Spleen (tissue), 13 donors: ENCODE measurements at regions of chr11 and their contacts with region 1.

Region 1: GRCh38 chr11:122863704-122864326 is 18.7 kb upstream of the JHY start:
- DNase-seq: no peak
- H3K4me3 ChIP-seq: peak overlapping the region in 1 of 8 donors; percentile 20
- H3K27ac ChIP-seq: peak overlapping the region in 2 of 8 donors; percentile 1 to 58
- H3K4me1 ChIP-seq: peaks cover 0 to 11% (median 7%) of the 10 kb centered on the region in 6 donors
- H3K27me3 ChIP-seq: peaks cover 0 to 13% (median 0%) of the 10 kb centered on the region in 7 donors
- CTCF ChIP-seq: peak; percentile 49 to 82 (median 75)
- POLR2A ChIP-seq: no peak

Region 2: GRCh38 chr11:122954455-122954854 is 90.6 kb after region 1 on chr11:
- intact Hi-C with region 1: no loop called
- DNase-seq: no peak
- H3K4me3 ChIP-seq: no peak overlapping the region
- H3K27ac ChIP-seq: no peak overlapping the region
- H3K4me1 ChIP-seq: peaks cover 0 to under 1% (median 0%) of the 10 kb centered on the region in 6 donors
- H3K27me3 ChIP-seq: no peaks in the 10 kb centered on the region
- CTCF ChIP-seq: no peak
- POLR2A ChIP-seq: no peak

Region 3: DNA sequence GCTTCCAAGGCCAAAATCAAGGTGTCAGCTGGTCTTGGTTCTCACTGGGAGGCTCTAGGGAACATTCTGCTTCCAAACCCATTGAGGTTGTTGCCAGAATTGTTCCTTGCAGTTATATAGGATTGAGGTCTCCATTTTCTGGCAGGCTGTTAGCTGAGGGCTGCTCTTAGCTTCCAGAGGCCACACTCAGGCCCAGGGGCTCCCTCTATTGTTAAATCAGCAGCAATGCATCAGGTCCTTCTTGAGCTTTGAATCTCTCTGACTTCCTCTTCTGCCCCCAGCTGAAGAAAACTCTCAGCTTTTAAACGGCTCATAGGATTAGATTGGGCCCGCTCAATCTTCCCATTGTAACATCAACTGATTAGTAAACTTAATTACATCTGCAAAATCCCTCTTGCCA is 157.2 kb after region 1 on chr11:
- intact Hi-C with region 1: loop called (anchors 10 kb)
- DNase-seq: no peak
- H3K4me3 ChIP-seq: no peak overlapping the region
- H3K27ac ChIP-seq: no peak overlapping the region
- H3K4me1 ChIP-seq: peaks cover 0 to 12% (median 8%) of the 10 kb centered on the region in 6 donors
- H3K27me3 ChIP-seq: peaks cover 0 to 11% (median 0%) of the 10 kb centered on the region in 7 donors
- CTCF ChIP-seq: peak in 9 of 11 experiments; percentile 14 to 67 (median 44)
- POLR2A ChIP-seq: no peak

Region 4: GRCh38 chr11:123054301-123055065 is 190.7 kb after region 1 on chr11:
- intact Hi-C with region 1: loop called (anchors 10 kb)
- DNase-seq: no peak
- H3K4me3 ChIP-seq: no peak overlapping the region
- H3K27ac ChIP-seq: peak overlapping the region in 4 of 8 donors; percentile 36 to 48 (median 42)
- H3K4me1 ChIP-seq: peaks cover 52 to 62% (median 58%) of the 10 kb centered on the region in 6 donors
- H3K27me3 ChIP-seq: no peaks in the 10 kb centered on the region
- CTCF ChIP-seq: peak; percentile 49 to 86 (median 73)
- POLR2A ChIP-seq: no peak